Activated CD4-positive, alpha-beta memory T cell treated with anti-CD3 and anti-CD28 coated beads, Interleukin-2, amount 10 ng/mL, durations not matched to agents 7 days and 5 days (primary cell): ENCODE measurements at regions of chr9 and their contacts with region 1.

Region 1: DNA sequence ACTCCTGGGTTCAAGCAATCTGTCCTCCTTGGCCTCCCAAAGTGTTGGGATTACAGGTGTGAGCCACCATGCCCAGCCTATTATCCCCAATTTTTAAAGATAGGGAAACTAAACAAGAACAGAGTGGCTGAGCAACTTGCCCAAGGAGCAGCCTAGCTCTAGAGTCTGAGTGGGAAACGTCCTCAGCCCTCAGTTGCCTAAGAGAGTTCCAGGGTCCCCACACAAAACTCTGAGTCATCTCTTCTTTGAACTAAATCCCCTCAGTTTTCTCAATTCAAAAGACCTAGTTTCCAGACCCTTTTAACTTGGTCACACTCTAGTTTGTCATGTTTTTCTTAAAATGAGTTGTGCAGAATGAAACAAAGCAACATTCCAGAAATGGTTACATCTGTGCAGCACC is 33.5 kb downstream of the GGTA1 start:
- DNase-seq: no peak
- H3K4me3 Mint-ChIP-seq: no peak overlapping the region
- H3K27ac Mint-ChIP-seq: no peak overlapping the region
- H3K4me1 Mint-ChIP-seq: peaks cover 6% of the 10 kb centered on the region
- H3K27me3 Mint-ChIP-seq: peaks cover 52% of the 10 kb centered on the region

Region 2: DNA sequence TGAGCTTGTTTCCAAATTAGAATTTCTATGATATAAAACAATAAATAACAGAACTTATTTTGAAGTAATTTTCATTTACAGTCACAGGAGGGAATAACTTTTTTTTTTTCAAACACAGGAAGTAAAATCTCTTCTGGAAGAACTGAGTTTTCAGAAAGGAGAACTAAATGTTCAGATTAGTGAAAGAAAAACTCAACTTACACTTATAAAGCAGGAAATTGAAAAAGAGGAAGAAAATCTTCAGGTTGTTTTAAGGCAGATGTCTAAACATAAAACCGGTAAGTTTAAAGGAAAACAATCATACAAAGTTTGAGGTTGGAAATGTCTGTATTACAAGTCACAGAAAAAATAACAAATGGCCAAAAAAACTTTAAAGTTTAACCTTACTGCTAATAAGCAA is 306.1 kb before region 1 on chr9:
- CTCF ChIA-PET with region 1: no interaction called
- POLR2A ChIA-PET with region 1: no interaction called
- DNase-seq: no peak
- H3K4me3 Mint-ChIP-seq: no peak overlapping the region
- H3K27ac Mint-ChIP-seq: peak overlapping the region; percentile 50
- H3K4me1 Mint-ChIP-seq: peaks cover 26% of the 10 kb centered on the region
- H3K27me3 Mint-ChIP-seq: no peaks in the 10 kb centered on the region

Region 3: GRCh38 chr9:121455527-121456239 is 10.5 kb before region 1 on chr9:
- CTCF ChIA-PET with region 1: interaction called, 10 read pairs
- POLR2A ChIA-PET with region 1: no interaction called
- DNase-seq: peak; percentile 28
- H3K4me3 Mint-ChIP-seq: no peak overlapping the region
- H3K27ac Mint-ChIP-seq: no peak overlapping the region
- H3K4me1 Mint-ChIP-seq: peaks cover 10% of the 10 kb centered on the region
- H3K27me3 Mint-ChIP-seq: peaks cover 42% of the 10 kb centered on the region